ENCODE measurements at regions of chr12 and their contacts with region 1.

Region 1: GRCh38 chr12:106223485-106224354 is 24.1 kb downstream of the CKAP4 start:
- DNase-seq: peak; percentile 64 to 90
- ATAC-seq: peak; percentile 80 to 92
- H3K4me3 ChIP-seq: no peak overlapping the region
- H3K27ac ChIP-seq: no peak overlapping the region
- H3K4me1 ChIP-seq: peaks cover 11% of the 10 kb centered on the region
- CTCF ChIP-seq: peak; percentile 88
- EP300 ChIP-seq: no peak
- POLR2A ChIP-seq: no peak
- RAD21 ChIP-seq: peak; percentile 89 to 95

Region 2: GRCh38 chr12:106211973-106212372 is 11.7 kb before region 1 on chr12:
- CTCF ChIA-PET with region 1: interaction called, 29 read pairs
- POLR2A ChIA-PET with region 1: no interaction called
- DNase-seq: no peak
- ATAC-seq: no peak
- H3K4me3 ChIP-seq: no peak overlapping the region
- H3K27ac ChIP-seq: no peak overlapping the region
- H3K4me1 ChIP-seq: no peaks in the 10 kb centered on the region
- CTCF ChIP-seq: no peak
- EP300 ChIP-seq: no peak
- POLR2A ChIP-seq: no peak
- RAD21 ChIP-seq: no peak

Region 3: DNA sequence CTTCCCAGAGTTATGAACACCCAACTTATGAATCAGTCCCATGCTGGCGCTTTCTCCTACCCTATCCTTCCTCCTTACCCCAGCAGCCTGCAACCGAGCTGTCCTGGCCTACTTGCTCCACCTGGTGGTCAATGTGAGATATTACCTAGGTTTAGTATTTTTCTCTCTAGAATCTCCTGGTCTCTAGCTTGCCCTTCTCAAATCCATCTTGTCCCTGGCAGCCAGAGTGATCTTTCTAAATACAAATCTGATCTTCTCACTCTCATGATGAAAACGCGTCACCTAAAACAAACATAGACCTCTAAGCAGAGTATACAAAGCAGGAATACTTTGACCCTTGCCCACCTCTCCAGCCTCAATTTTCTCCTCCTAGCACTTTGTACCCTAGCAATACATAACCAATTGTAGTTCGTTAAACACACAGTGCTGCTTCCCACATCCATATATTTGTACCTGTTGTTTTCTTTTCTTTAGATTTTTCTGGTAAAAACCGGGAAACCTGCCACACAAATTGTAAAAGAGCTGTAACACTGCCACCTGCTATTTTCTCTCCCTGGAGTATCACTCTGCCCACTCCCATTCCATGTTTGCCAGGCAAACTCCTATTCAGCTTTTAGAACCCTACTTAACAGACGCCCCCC is 58.9 kb after region 1 on chr12:
- CTCF ChIA-PET with region 1: interaction called, 43 read pairs
- POLR2A ChIA-PET with region 1: no interaction called
- DNase-seq: peak; percentile 62 to 83
- ATAC-seq: peak; percentile 77 to 91
- H3K4me3 ChIP-seq: no peak overlapping the region
- H3K27ac ChIP-seq: peak overlapping the region in 1 of 2 experiments; percentile 11; a peak in 1 of 6 replicates
- H3K4me1 ChIP-seq: peaks cover 4% of the 10 kb centered on the region
- CTCF ChIP-seq: peak; percentile 69
- EP300 ChIP-seq: no peak
- POLR2A ChIP-seq: no peak
- RAD21 ChIP-seq: peak; percentile 66 to 87

Region 4: GRCh38 chr12:106345739-106346138 is 122.0 kb after region 1 on chr12:
- CTCF ChIA-PET with region 1: interaction called, 30 read pairs
- POLR2A ChIA-PET with region 1: interaction called, 3 read pairs
- DNase-seq: peak; percentile 29 to 87
- ATAC-seq: peak; percentile 88 to 97
- H3K4me3 ChIP-seq: no peak overlapping the region
- H3K27ac ChIP-seq: 0 out of 6 replicates have a peak overlapping the region, but pooled peaks of 1 of the 2 experiments have one; percentile 47
- H3K4me1 ChIP-seq: peaks cover 13% of the 10 kb centered on the region
- CTCF ChIP-seq: peak; percentile 49
- EP300 ChIP-seq: no peak
- POLR2A ChIP-seq: no peak
- RAD21 ChIP-seq: peak; percentile 59 to 80

Region 5: GRCh38 chr12:106378788-106379187 is 155.1 kb after region 1 on chr12:
- CTCF ChIA-PET with region 1: interaction called, 13 read pairs
- POLR2A ChIA-PET with region 1: no interaction called
- DNase-seq: no peak
- ATAC-seq: no peak
- H3K4me3 ChIP-seq: no peak overlapping the region
- H3K27ac ChIP-seq: no peak overlapping the region
- H3K4me1 ChIP-seq: no peaks in the 10 kb centered on the region
- CTCF ChIP-seq: no peak
- EP300 ChIP-seq: no peak
- POLR2A ChIP-seq: no peak
- RAD21 ChIP-seq: no peak

Region 6: GRCh38 chr12:106551410-106551809 is 327.7 kb after region 1 on chr12:
- CTCF ChIA-PET with region 1: no interaction called
- POLR2A ChIA-PET with region 1: no interaction called
- DNase-seq: no peak
- ATAC-seq: no peak
- H3K4me3 ChIP-seq: no peak overlapping the region
- H3K27ac ChIP-seq: no peak overlapping the region
- H3K4me1 ChIP-seq: no peaks in the 10 kb centered on the region
- CTCF ChIP-seq: no peak
- EP300 ChIP-seq: no peak
- POLR2A ChIP-seq: no peak
- RAD21 ChIP-seq: no peak